RWPE1 (cell line): ENCODE measurements at regions of chr16 and their contacts with region 1.

Region 1: DNA sequence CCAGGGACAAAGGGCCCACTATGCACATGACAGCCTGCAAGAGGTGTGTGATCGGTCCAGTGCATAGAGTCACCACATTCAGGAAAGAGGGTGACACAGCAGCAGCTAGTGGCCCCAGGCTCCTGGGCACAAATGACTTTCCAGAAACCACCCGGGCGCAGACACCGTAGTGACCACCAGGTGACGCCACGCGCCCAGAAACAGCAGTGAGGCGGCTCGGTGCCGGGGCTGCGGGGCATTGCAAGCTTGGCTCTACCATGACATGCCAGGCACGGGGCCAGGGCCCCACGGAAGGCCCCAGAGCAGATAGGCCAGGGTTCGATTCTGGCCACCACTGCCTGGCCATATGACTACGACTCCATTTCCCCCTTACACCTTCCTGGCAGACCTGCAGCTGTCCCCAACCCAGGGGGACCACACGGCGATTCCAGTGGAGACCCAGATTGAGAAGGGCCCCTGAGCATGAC is 6.7 kb downstream of the RHBDF1 start:
- DNase-seq: peak; percentile 70
- H3K27ac ChIP-seq: no peak overlapping the region
- CTCF ChIP-seq: peak; percentile 97

Region 2: DNA sequence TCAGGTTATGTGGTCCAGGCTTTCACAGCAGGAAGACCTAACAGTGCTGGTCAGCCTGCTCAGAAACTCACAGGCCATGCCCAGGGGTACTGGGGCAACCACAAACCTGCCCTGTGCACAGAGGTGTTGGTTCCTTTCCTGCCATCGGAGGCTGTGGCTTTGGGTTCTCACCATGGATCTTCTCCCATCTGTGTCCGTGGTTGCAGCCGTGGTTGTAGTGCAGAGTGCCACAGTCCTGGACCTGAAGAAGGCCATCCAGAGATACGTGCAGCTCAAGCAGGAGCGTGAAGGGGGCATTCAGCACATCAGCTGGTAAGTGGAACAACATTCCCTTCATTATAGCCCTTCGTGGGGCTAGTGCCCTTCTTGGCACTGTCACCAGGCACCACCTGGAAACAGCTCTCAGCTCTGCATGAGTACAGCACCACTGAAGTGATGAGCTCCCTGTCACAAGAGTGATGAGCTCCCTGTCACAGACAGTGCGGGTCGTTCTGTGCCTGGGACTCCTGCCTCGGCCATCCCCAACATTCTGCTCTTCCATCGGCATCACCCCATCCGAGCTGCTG is 10.1 kb before region 1 on chr16:
- CTCF ChIA-PET with region 1: interaction called, 10 read pairs
- POLR2A ChIA-PET with region 1: no interaction called
- DNase-seq: no peak
- H3K27ac ChIP-seq: peak overlapping the region; percentile 37
- CTCF ChIP-seq: no peak

Region 3: GRCh38 chr16:77807-78443 is 12.2 kb after region 1 on chr16 and contains the start of gene MPG:
- CTCF ChIA-PET with region 1: interaction called, 14 read pairs
- POLR2A ChIA-PET with region 1: interaction called, 4 read pairs
- DNase-seq: peak; percentile 93
- H3K27ac ChIP-seq: peak within 1 kb of the TSS; percentile 91
- CTCF ChIP-seq: no peak

Region 4: GRCh38 chr16:96935-97381 is 31.3 kb after region 1 on chr16:
- CTCF ChIA-PET with region 1: interaction called, 135 read pairs
- POLR2A ChIA-PET with region 1: no interaction called
- DNase-seq: peak; percentile 94
- H3K27ac ChIP-seq: peak overlapping the region; percentile 32
- CTCF ChIP-seq: peak; percentile 97

Region 5: GRCh38 chr16:106623-107324 is 41.1 kb after region 1 on chr16:
- CTCF ChIA-PET with region 1: interaction called, 18 read pairs
- POLR2A ChIA-PET with region 1: interaction called, 5 read pairs
- DNase-seq: peak; percentile 63
- H3K27ac ChIP-seq: no peak overlapping the region
- CTCF ChIP-seq: peak; percentile 84